IMR-90 (cell line): ENCODE measurements at regions of chr5 and their contacts with region 1.

Region 1: DNA sequence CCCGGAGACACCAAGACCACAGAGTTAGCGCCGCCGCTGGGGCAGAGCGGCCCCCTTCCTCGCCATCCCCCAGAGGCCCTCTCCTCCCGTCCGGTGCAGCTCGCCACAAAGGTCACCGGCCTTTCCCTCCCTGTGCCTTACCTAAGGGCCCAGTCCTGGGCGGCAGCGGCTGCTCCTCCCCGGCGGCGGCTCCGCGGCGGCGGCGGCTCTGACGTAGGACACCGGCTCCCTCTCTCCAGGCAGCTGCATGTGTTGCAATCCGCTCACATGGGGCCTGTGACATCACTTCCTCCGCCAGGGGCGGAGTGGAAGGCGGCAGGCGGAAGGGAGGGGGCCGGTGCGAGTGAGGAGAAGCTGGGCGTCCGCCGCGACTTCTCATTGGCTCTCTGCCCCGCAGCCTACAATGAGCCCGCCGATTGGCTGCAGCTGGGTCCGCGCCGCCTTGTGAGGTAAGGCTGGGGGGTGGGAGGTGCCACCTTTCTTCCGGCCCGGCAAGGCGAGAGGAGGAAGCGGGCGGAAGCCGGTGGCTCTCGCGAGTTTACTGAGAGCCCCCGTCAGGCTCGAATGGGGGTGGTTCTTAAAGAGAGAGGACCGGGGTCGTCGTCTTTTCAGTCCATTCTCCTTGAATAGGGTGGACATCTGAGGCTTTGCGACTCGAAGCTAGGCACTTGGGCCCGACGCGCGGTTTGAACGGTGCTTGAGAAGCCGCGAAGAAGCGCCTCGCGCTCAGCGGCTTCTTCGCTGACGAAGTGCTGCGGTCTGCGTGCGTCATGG is at the start of gene ETF1:
- DNase-seq: peak; percentile 99
- ATAC-seq: peak; percentile 93
- H3K4me3 ChIP-seq: peak within 1 kb of the TSS; percentile 76
- H3K27ac ChIP-seq: peak within 1 kb of the TSS; percentile 92
- H3K4me1 ChIP-seq: peaks cover 6% of the 10 kb centered on the region
- H3K27me3 ChIP-seq: no peaks in the 10 kb centered on the region
- CTCF ChIP-seq: no peak
- POLR2A ChIP-seq: peak; percentile 92
- RAD21 ChIP-seq: no peak
- total RNA-seq, gene ETF1: 126 and 144 TPM in 2 replicates

Region 2: GRCh38 chr5:138352071-138352721 is 190.9 kb before region 1 on chr5 and contains the start of gene KDM3B:
- CTCF ChIA-PET with region 1: no interaction called
- POLR2A ChIA-PET with region 1: no interaction called
- dilution Hi-C with region 1: no loop called
- in situ Hi-C with region 1: no loop called
- intact Hi-C with region 1: no loop called
- DNase-seq: peak; percentile 80
- ATAC-seq: peak; percentile 83
- H3K4me3 ChIP-seq: peak within 1 kb of the TSS; percentile 73
- H3K27ac ChIP-seq: peak within 1 kb of the TSS; percentile 78
- H3K4me1 ChIP-seq: peaks cover 2% of the 10 kb centered on the region; the same call in 1 of the 2 replicates
- H3K27me3 ChIP-seq: no peaks in the 10 kb centered on the region
- CTCF ChIP-seq: peak; percentile 99
- POLR2A ChIP-seq: no peak
- RAD21 ChIP-seq: no peak; the same call in 1 of the 2 replicates
- total RNA-seq, gene KDM3B: 35.8 and 36.7 TPM in 2 replicates

Region 3: DNA sequence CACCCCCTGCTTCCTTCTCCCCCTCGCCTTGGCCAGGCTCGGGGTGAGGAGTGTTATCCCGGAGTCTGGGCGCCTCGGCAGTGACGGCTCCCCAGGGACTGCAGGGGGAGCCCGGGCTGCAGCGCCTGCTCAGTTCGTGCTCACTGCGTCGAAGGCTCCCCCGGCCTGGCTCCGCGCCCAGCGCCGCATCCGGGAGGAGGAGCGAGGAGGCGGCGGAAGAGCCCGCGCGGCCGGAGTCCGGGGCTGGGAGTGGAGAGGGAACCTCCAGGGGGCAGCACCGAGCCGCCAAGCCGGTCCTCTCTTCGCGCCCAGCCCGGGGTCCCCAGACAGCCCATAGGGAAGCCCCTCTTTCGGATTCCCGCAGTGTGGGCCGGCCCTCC is 79.1 kb before region 1 on chr5:
- CTCF ChIA-PET with region 1: interaction called, 4 read pairs
- POLR2A ChIA-PET with region 1: interaction called, 7 read pairs
- dilution Hi-C with region 1: no loop called
- in situ Hi-C with region 1: no loop called
- intact Hi-C with region 1: loop called (anchors 1 kb)
- DNase-seq: peak; percentile 93
- ATAC-seq: peak; percentile 45
- H3K4me3 ChIP-seq: peak overlapping the region; percentile 66
- H3K27ac ChIP-seq: peak overlapping the region; percentile 94
- H3K4me1 ChIP-seq: peaks cover 12% of the 10 kb centered on the region; the same call in 1 of the 2 replicates
- H3K27me3 ChIP-seq: no peaks in the 10 kb centered on the region
- CTCF ChIP-seq: no peak
- POLR2A ChIP-seq: no peak
- RAD21 ChIP-seq: no peak